ENCODE measurements at regions of chr14 and their contacts with region 1.

Region 1: DNA sequence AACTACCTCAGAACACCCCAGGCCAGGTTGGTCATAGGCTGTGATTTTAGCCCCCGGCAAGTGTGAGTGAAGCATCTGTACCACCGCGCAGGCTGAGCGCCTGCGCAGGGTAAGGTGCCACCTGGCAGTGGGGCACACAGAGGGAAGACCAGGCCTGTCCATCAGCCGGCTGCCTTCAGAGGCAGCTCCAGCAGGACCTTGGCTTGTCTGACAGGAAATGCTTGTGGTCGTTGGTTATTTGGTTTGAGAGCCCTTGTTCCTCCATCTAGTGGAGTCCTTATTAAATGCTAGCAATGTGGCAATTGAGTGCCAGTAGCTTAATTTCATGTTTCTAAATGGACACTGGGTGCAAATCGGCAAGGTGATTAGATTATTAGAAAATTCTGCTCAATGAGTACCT is 27.5 kb downstream of the SLC25A29 start:
- DNase-seq: peak; percentile 23 to 39 (median 24)
- H3K4me3 ChIP-seq: no peak overlapping the region
- H3K4me3 Mint-ChIP-seq: no peak overlapping the region
- H3K27ac ChIP-seq: peak overlapping the region; percentile 44 to 54
- H3K27ac Mint-ChIP-seq: peak overlapping the region in 5 of 7 donors; percentile 33 to 77 (median 59)
- H3K4me1 ChIP-seq: peaks cover 8 to 14% of the 10 kb centered on the region in 2 donors
- H3K4me1 Mint-ChIP-seq: peaks cover 33% of the 10 kb centered on the region
- H3K27me3 ChIP-seq: no peaks in the 10 kb centered on the region
- H3K27me3 Mint-ChIP-seq: peaks cover 0 to 2% (median 0%) of the 10 kb centered on the region in 3 donors
- CTCF ChIP-seq: peak; percentile 26

Region 2: GRCh38 chr14:100239840-100240724 is 38.6 kb before region 1 on chr14:
- intact Hi-C with region 1: loop called in 1 of 2 experiments (anchors 5 kb)
- DNase-seq: peak; percentile 75 to 82 (median 82)
- H3K4me3 ChIP-seq: peak overlapping the region; percentile 85 to 99 (median 95)
- H3K4me3 Mint-ChIP-seq: peak overlapping the region; percentile 84 to 88
- H3K27ac ChIP-seq: peak overlapping the region; percentile 71 to 89
- H3K27ac Mint-ChIP-seq: peak overlapping the region; percentile 87 to 95 (median 88)
- H3K4me1 ChIP-seq: peaks cover 38 to 49% of the 10 kb centered on the region in 2 donors
- H3K4me1 Mint-ChIP-seq: peaks cover 56% of the 10 kb centered on the region
- H3K27me3 ChIP-seq: no peaks in the 10 kb centered on the region
- H3K27me3 Mint-ChIP-seq: no peaks in the 10 kb centered on the region
- CTCF ChIP-seq: peak; percentile 76

Region 3: GRCh38 chr14:100317912-100318808 is 39.5 kb after region 1 on chr14:
- intact Hi-C with region 1: loop called in 1 of 2 experiments (anchors 5 kb)
- DNase-seq: peak; percentile 58 to 68 (median 64)
- H3K4me3 ChIP-seq: peak overlapping the region; percentile 39 to 80 (median 47)
- H3K4me3 Mint-ChIP-seq: peak overlapping the region; percentile 79 to 87
- H3K27ac ChIP-seq: peak overlapping the region; percentile 60 to 72
- H3K27ac Mint-ChIP-seq: peak overlapping the region; percentile 78 to 97 (median 90)
- H3K4me1 ChIP-seq: peaks cover 12 to 17% of the 10 kb centered on the region in 2 donors
- H3K4me1 Mint-ChIP-seq: peaks cover 9% of the 10 kb centered on the region
- H3K27me3 ChIP-seq: no peaks in the 10 kb centered on the region
- H3K27me3 Mint-ChIP-seq: peaks cover 0 to 12% (median 5%) of the 10 kb centered on the region in 3 donors
- CTCF ChIP-seq: peak; percentile 96

Region 4: DNA sequence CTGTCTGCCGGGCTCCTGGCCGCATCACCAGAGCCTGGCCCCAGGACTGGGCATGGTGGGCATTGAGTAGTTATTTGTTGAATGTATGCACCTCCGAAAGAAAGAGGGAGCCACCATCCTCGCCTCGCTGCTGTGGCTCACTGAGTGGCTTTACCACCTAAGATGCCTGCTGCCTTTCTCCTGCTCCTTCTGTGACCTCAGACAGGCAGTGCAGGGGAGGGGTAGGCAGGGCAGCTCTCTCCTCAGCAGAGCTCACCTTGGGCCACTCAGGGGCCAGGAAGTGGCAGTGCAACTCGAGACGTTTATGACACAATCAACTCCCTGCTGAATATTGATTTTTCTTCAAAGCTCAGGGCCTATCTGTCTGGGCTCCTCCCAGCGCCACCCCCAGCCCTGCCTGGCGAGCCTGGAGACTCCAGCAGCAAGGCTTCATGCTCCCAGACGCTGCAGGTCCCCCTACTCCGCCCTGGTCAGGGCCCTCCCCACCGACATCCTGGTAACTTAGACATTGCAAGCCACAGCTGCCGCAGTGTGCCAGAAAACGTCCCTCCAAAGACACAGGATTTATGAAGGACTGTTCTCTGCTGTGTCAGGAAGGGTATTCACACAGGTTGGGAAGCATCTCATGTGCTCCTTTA is 1198.3 kb after region 1 on chr14:
- intact Hi-C with region 1: no loop called
- DNase-seq: no peak
- H3K4me3 ChIP-seq: no peak overlapping the region
- H3K4me3 Mint-ChIP-seq: no peak overlapping the region
- H3K27ac ChIP-seq: no peak overlapping the region
- H3K27ac Mint-ChIP-seq: no peak overlapping the region
- H3K4me1 ChIP-seq: peaks cover 0 to 5% of the 10 kb centered on the region in 2 donors
- H3K4me1 Mint-ChIP-seq: peaks cover 7% of the 10 kb centered on the region
- H3K27me3 ChIP-seq: no peaks in the 10 kb centered on the region
- H3K27me3 Mint-ChIP-seq: peaks cover 5 to 11% (median 10%) of the 10 kb centered on the region in 3 donors
- CTCF ChIP-seq: no peak